ENCODE measurements at regions of chr4 and their contacts with region 1.

Region 1: DNA sequence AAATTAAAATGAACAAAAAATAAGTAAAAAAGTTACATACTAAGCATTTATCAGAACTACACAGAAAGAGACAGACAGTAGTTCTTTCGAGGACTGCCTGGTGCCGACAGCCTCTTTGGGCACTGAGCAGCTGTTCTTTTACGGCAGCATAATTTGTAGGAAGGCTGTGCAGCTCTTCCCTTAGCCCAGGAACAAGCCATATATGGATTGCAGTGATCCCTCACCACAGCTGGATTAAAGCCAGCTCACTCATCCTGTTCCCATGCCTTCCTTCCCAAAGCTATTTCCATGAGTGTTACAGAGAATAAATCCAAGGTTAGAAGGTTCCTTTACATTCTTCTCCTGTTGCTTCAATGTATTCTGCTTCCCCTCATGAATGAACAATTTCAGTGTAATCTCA is 71.7 kb downstream of the DDX60L start:
- DNase-seq: peak; percentile 38 to 62
- ATAC-seq: peak; percentile 88 to 96 (median 94)
- H3K4me3 ChIP-seq: no peak overlapping the region
- H3K27ac ChIP-seq: peak overlapping the region; percentile 69
- H3K4me1 ChIP-seq: peaks cover 38% of the 10 kb centered on the region
- H3K27me3 ChIP-seq: no peaks in the 10 kb centered on the region
- CTCF ChIP-seq: no peak

Region 2: GRCh38 chr4:168183717-168184608 is 224.7 kb before region 1 on chr4:
- intact Hi-C with region 1: loop called in 1 of 2 experiments (anchors 10 kb)
- DNase-seq: no peak
- ATAC-seq: peak; percentile 50 to 77 (median 64)
- H3K4me3 ChIP-seq: no peak overlapping the region
- H3K27ac ChIP-seq: no peak overlapping the region
- H3K4me1 ChIP-seq: no peaks in the 10 kb centered on the region
- H3K27me3 ChIP-seq: no peaks in the 10 kb centered on the region
- CTCF ChIP-seq: peak; percentile 74

Region 3: DNA sequence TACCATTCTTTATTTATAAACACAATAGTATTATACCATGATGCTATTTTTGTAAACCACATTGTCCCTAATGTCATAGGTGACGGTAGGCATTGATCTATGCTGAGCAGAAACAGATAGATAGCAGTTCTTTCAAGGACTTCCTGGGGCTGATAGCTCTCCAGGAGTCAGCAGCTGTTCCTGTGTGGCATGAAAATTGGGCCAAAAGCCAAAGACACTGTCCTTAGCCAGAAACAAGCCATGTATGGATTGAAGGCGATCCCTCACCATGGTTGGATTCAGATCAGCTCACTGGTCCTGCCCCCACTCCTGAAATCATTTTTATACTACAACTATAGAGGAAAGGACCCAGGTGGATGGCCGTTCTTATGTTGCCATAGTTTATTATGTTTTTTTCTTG is 143.7 kb before region 1 on chr4:
- intact Hi-C with region 1: loop called in 1 of 2 experiments (anchors 5 kb)
- DNase-seq: no peak
- ATAC-seq: peak; percentile 82 to 91 (median 87)
- H3K4me3 ChIP-seq: no peak overlapping the region
- H3K27ac ChIP-seq: peak overlapping the region; percentile 38
- H3K4me1 ChIP-seq: peaks cover 26% of the 10 kb centered on the region
- H3K27me3 ChIP-seq: no peaks in the 10 kb centered on the region
- CTCF ChIP-seq: no peak

Region 4: DNA sequence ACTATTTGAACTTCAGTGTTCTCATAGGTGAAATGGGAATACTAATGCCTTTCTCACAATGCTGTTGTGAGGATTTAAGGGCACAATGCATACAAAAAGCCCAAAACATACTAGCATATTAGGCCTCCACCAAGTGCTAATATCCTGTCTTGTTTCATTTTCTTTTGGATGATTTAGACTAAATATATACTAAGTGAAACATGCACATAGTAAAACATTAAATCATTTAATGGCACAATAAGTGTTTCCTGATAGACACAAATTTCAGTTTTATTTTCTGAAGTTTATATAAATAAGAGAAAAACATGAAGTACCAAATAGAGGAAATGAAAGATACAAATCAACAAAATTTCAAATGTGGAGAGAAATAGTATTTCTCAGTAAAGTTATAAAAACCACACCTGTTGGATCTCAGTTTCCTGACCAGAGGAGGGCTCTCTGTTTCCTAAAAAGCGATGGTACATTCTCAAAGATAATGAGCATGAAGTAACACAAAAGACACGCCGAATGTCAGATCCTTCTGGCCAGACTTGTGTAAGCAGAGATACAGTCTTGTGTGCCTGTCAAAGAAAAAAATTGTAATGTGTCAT is 115.1 kb before region 1 on chr4:
- intact Hi-C with region 1: loop called in 1 of 2 experiments (anchors 10 kb)
- DNase-seq: no peak
- ATAC-seq: no peak
- H3K4me3 ChIP-seq: no peak overlapping the region
- H3K27ac ChIP-seq: no peak overlapping the region
- H3K4me1 ChIP-seq: no peaks in the 10 kb centered on the region
- H3K27me3 ChIP-seq: no peaks in the 10 kb centered on the region
- CTCF ChIP-seq: no peak

Region 5: GRCh38 chr4:168453146-168453545 is 44.5 kb after region 1 on chr4:
- intact Hi-C with region 1: no loop called
- DNase-seq: no peak
- ATAC-seq: no peak
- H3K4me3 ChIP-seq: no peak overlapping the region
- H3K27ac ChIP-seq: no peak overlapping the region
- H3K4me1 ChIP-seq: peaks cover 10% of the 10 kb centered on the region
- H3K27me3 ChIP-seq: no peaks in the 10 kb centered on the region
- CTCF ChIP-seq: no peak

Region 6: DNA sequence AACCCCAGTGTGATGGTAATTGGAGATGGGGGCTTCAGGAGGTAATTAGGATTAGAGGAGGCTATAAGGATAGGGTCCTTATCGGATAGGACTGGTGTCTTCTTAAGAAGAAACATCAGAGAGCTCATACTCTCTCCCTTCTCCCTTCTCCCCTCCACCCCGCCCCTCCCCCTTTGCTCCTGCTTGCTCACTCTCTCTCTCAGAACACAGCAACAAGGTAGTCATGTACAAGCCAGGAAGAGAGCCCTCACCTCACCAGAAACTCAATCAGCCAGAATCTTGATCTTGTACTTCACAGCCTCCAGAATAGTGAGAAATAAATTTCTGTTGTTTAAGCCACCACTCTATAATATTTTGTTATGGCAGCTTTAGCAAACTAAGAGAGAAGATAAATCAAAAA is 67.1 kb after region 1 on chr4:
- intact Hi-C with region 1: loop called in 1 of 2 experiments (anchors 5 kb)
- DNase-seq: no peak
- ATAC-seq: no peak
- H3K4me3 ChIP-seq: no peak overlapping the region
- H3K27ac ChIP-seq: no peak overlapping the region
- H3K4me1 ChIP-seq: peaks cover 5% of the 10 kb centered on the region
- H3K27me3 ChIP-seq: no peaks in the 10 kb centered on the region
- CTCF ChIP-seq: no peak